Tibial artery (tissue), 4 donors: ENCODE measurements at regions of chr3 and their contacts with region 1.

Region 1: DNA sequence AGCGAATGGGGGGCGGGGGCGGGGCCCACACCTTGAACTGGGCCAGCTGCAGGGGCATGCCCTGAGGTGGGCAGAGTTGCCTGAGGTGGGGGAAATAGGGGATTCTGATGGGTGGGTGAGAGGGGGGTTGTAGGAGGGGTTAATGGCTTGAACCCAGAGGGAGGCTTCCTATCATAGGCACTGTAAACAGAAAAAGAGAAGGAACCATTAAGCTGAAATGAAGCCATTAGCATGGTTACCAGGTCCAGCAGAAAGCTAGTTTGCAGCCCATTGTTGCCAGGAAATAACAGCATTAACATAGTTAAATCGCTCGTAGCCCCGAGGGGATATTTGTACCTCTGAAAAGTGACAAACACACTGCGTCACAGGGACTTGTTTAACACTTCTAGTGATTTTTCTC is 29.0 kb downstream of the ETV5 start:
- DNase-seq: no peak
- H3K4me3 ChIP-seq: no peak overlapping the region
- H3K27ac ChIP-seq: no peak overlapping the region
- H3K4me1 ChIP-seq: no peaks in the 10 kb centered on the region
- H3K27me3 ChIP-seq: no peaks in the 10 kb centered on the region
- CTCF ChIP-seq: no peak

Region 2: DNA sequence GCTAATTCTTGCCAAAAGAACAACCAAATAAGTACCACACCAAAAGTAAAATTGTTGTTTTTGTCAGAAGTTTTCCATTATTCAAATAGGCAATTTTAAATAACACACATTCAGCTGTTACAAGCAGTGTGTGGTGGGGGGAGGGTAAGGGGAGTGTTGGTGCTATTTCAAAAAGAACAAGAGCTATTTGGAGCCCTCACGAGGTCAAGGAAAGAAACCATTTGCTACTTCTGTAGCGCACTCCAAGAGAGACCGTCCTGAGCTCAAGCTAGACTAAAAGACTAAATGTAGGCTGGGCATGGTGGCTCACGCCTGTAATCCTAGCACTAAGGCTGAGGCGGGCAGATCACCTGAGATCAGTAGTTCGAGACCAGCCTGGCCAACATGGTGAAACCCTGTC is 233.9 kb before region 1 on chr3:
- intact Hi-C with region 1: no loop called
- DNase-seq: no peak
- H3K4me3 ChIP-seq: no peak overlapping the region
- H3K27ac ChIP-seq: no peak overlapping the region
- H3K4me1 ChIP-seq: no peaks in the 10 kb centered on the region
- H3K27me3 ChIP-seq: peaks cover 0 to 6% of the 10 kb centered on the region in 2 donors
- CTCF ChIP-seq: no peak

Region 3: DNA sequence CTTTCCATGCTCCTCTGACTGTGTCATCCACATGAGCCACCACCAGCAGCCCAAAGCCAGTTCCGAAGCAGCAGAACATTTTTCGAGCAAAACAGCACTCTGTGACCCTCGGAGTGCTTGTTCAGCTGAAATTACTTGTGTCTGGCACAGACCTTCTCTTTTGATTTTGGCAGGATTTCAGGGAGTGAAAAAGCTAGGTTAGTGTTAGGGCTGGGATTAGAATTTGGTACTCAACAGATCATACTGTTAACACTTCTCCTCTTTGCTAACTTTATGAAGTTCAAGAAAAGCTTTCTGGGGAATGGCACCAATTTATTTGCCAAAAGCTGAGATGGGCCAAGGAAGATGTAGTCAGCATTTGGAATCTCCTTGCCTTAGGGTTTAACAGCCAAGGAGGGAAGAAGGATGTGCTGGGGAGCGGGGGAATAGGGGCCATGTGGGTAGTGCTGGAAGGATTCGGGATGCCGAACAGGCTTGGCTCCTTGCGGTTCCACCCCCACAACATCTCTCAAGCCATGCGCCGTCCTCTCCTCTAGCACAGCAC is 87.0 kb before region 1 on chr3:
- intact Hi-C with region 1: no loop called
- DNase-seq: peak in 1 of 2 donors; percentile 37
- H3K4me3 ChIP-seq: no peak overlapping the region
- H3K27ac ChIP-seq: peak overlapping the region; percentile 46 to 52
- H3K4me1 ChIP-seq: peaks cover 0 to 19% (median 11%) of the 10 kb centered on the region in 4 donors
- H3K27me3 ChIP-seq: no peaks in the 10 kb centered on the region
- CTCF ChIP-seq: no peak

Region 4: DNA sequence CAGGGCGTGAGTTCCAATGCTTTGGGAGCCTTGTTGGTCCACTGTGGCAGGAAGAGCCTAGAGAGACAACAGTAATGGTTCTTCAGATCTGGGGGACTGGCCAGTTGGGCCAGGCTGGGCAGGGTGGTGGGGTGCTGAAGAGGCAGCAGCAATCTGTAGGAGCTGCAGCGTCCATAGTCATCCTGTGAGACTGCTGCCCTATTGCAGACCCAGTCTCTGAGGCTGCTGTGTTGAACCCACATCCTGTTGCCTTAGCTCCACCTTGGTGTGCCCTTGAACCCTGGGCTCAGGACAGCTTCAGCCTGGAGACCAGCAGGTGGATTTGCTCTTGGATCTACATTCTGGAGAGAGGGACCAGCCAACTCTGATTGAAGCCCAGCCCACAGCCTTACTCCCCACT is 52.6 kb after region 1 on chr3:
- intact Hi-C with region 1: loop called (anchors 5 kb)
- DNase-seq: no peak
- H3K4me3 ChIP-seq: no peak overlapping the region
- H3K27ac ChIP-seq: no peak overlapping the region
- H3K4me1 ChIP-seq: no peaks in the 10 kb centered on the region
- H3K27me3 ChIP-seq: no peaks in the 10 kb centered on the region
- CTCF ChIP-seq: no peak

Region 5: GRCh38 chr3:186217820-186218164 is 137.9 kb after region 1 on chr3:
- intact Hi-C with region 1: no loop called
- DNase-seq: no peak
- H3K4me3 ChIP-seq: no peak overlapping the region
- H3K27ac ChIP-seq: no peak overlapping the region
- H3K4me1 ChIP-seq: peaks cover 0 to 20% (median 5%) of the 10 kb centered on the region in 4 donors
- H3K27me3 ChIP-seq: no peaks in the 10 kb centered on the region
- CTCF ChIP-seq: no peak